Naive thymus-derived CD4-positive, alpha-beta T cell (primary cell): ENCODE measurements at regions of chr2 and their contacts with region 1.

Region 1: DNA sequence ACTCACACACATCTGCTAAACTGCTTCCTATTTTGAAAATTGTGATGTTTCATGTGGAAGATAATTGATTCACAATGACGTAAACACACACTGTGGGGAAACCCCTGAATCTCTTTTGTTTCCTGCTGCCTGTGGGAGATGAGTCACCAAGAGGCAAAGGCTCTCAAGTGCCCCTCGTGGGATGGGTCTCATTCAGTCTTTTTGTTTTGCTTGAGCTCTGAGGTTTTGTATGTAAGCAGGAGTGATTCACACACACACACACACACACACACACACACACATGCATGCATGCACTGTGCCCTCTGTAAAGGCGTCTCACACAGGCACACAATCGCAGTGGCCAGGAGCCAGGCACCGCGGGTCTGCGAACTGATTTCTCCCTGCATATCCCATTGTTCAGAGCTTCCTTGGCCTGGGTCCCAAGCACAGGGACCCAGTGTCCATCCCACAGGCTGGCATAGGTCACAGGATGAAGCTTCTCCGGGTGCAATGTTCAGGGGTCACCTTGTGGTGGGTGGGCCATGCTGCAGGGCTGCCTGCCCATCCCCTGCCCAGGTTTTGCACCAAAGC is 12.1 kb upstream of the ARHGEF4 start:
- DNase-seq: peak in 7 of 9 donors; percentile 25 to 75 (median 54)
- ATAC-seq: peak; percentile 85
- H3K4me3 ChIP-seq: no peak overlapping the region
- H3K4me3 Mint-ChIP-seq: peak overlapping the region in 2 of 10 donors; percentile 24 to 60
- H3K27ac ChIP-seq: no peak overlapping the region
- H3K27ac Mint-ChIP-seq: peak overlapping the region in 7 of 9 donors; percentile 41 to 83 (median 68)
- H3K4me1 ChIP-seq: peaks cover 11 to 14% of the 10 kb centered on the region in 2 donors
- H3K4me1 Mint-ChIP-seq: peaks cover 5 to 19% (median 9%) of the 10 kb centered on the region in 7 donors
- H3K27me3 ChIP-seq: no peaks in the 10 kb centered on the region
- H3K27me3 Mint-ChIP-seq: peaks cover 0 to 15% (median 0%) of the 10 kb centered on the region in 5 donors

Region 2: DNA sequence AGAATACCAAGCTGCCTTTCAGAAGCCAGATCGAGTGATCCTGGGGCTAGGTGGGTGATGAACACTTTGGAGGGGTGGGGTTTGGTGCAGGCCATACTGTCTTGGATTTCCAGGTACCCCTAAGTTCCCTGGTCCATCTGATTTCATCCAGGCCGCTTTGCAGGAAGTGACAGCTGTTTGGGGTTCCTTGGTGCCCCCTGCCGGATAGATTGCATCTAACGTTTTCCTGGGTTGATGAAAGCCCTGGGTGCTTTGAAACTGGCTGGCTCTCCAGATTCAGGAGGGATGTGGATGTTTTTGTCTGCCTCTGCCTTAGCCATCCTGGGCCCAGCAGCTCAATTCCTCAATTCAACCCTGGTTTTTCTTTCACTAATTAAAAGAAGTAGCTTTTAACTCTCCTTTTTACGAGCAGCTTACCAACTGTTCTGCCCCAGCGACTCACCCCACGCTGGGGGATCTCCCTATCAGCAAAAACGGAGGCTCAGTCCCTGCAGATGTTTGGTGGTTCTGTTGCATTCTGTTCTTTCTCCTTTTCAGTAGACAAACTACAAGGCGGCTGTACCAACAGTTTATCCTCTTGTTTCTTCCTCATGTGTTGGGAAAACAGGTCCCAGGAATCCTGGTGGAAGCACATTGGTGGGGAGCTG is 49.2 kb after region 1 on chr2:
- CTCF ChIA-PET with region 1: no interaction called
- POLR2A ChIA-PET with region 1: no interaction called
- intact Hi-C with region 1: loop called in 1 of 2 experiments (anchors 1 kb)
- DNase-seq: peak; percentile 24 to 67 (median 49)
- ATAC-seq: peak; percentile 76
- H3K4me3 ChIP-seq: no peak overlapping the region
- H3K4me3 Mint-ChIP-seq: no peak overlapping the region
- H3K27ac ChIP-seq: no peak overlapping the region
- H3K27ac Mint-ChIP-seq: no peak overlapping the region
- H3K4me1 ChIP-seq: no peaks in the 10 kb centered on the region
- H3K4me1 Mint-ChIP-seq: no peaks in the 10 kb centered on the region
- H3K27me3 ChIP-seq: no peaks in the 10 kb centered on the region
- H3K27me3 Mint-ChIP-seq: peaks cover 0 to 19% (median 4%) of the 10 kb centered on the region in 5 donors